ENCODE measurements at regions of chr12 and their contacts with region 1.

Region 1: DNA sequence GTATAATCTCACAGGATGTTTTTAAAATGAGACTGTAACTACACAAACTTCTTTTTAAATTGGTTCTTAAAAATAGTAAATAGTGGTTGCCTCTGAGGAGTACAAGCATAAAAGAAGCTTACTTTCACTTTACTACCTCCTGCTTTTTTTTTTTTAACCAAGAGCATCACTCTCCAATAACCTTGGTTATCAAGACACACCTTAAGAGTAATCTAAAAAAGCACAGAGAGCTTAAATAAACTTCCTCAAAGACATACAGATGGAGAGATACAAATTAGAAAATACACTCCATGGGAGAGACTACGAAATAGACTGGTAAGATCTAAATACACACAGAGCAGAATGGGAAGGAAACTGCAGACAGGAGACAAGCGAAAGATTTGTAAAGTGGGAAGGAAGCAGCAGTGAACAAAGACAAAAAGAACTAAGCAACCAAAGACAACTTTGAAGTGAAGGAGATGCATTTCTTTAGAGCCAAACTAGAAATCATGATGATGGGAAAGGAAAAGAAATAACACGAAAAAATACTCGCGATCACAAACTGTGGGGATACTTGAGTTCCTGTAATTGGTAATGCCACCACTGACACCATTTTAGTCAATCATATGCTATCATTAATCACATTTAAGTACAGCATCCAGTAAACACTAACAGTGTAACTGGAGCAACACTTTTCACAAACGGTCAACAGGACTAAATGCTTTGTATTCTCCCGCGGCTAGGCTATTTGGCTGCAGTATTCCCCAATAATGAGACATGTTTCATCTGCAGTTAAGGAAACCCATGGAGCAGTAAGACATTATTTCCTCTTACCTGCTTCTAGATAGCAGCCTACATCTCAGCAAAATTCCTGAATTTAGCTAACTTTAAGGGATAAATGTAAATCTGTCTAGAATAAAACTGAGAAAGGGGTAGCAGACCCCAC is 8.2 kb downstream of the SINHCAF start:
- DNase-seq: no peak
- H3K4me3 Mint-ChIP-seq: peak overlapping the region; percentile 74
- H3K27ac Mint-ChIP-seq: peak overlapping the region; percentile 99
- H3K4me1 Mint-ChIP-seq: peaks cover 73% of the 10 kb centered on the region
- H3K27me3 Mint-ChIP-seq: no peaks in the 10 kb centered on the region

Region 2: DNA sequence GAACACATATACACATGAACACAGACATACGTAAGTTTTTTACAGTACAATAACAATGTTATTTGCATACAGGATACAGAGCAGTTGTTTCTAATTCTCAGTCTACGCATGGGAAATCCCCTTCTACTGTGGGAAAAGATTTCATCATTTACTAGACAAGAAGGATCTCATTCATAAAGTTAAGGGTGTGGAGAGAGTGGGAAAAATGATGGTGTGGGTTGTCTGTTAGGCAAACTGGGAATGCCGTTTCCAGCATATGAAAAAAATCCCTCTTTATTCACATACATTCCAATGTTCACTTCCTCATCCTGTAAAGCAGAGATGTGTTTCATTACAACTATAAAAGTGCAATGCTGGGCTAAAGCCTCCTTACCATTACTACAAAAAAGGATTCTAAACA is 112.7 kb before region 1 on chr12:
- CTCF ChIA-PET with region 1: no interaction called
- intact Hi-C with region 1: loop called (anchors 5 kb)
- DNase-seq: no peak
- H3K4me3 Mint-ChIP-seq: no peak overlapping the region
- H3K27ac Mint-ChIP-seq: peak overlapping the region; percentile 14
- H3K4me1 Mint-ChIP-seq: peaks cover 23% of the 10 kb centered on the region
- H3K27me3 Mint-ChIP-seq: peaks cover 15% of the 10 kb centered on the region

Region 3: DNA sequence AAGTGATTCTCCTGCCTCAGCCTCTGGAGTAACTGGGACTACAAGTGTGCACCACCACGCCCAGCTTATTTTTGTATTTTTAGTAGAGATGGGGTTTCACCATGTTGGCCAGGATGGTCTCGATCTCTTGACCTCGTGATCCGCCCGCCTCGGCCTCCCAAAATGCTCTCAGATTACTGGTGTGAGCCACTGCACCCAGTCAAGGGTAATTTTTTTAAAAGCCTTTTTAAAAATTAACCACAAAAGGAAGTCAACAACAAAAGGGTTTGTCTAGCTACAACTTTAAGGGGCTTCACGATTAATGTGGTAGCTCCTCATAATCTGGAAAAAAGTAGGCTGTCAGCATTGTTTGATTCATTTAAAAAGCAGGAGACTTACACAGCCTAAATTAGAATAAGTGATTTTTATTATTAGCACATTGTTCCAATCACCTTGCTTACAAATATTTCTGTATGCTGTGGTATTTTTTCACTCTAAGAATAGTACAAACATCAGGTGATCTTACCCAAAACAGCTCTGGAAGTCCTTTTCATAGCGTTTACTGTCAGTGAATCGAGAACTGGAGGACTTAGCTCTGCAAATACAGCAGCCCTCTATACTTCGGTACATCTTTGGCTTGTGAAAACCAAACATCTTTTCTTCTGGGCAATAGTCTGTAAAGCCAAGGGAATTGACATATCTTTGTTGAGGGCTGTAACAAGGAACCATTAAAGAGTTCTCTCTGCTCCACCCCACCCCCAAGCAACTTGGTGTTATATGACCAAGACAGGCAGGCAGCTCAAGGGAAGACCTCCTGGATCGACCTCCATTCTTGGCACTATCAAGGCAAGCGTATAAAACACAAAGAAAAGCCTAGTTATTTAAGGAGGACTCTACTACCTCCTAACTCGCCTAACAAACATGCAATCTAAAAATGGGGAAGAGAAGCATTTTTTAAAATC is 19.9 kb before region 1 on chr12:
- CTCF ChIA-PET with region 1: interaction called, 3 read pairs
- intact Hi-C with region 1: loop called (anchors 2 kb)
- DNase-seq: no peak
- H3K4me3 Mint-ChIP-seq: no peak overlapping the region
- H3K27ac Mint-ChIP-seq: peak overlapping the region; percentile 83
- H3K4me1 Mint-ChIP-seq: peaks cover 35% of the 10 kb centered on the region
- H3K27me3 Mint-ChIP-seq: no peaks in the 10 kb centered on the region

Region 4: DNA sequence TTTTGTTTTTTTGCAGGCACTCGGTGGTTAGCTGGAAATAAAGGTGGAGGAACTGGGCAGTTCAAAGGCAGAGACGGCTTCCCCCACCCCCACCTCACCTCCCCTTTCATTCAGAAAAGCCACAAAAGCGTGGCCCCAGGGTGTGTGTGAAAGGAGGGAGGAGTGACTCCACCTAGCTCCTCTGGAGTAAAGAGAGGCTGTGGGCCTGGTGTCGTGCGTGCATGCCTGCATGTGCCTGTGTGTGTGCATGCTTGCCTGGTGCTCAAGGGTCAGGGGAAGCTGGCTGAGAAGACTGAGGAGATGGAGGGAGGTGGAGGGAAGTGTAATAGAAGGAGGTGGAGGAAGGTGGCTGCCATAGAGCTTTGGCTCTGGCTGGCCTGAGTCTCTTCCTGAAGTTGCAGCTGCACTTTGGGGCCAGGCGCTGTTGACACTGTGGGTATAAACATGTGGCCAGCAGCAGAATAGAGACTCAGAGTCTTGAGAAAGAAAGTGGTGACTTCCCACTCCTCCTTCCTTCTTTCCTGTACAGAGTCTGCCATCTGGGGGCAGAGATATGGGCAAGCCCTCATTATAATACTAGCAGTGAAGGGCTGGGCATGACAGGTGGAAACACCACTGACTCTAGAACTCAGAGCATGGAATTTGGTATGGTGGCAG is 45.2 kb after region 1 on chr12:
- CTCF ChIA-PET with region 1: interaction called, 3 read pairs
- intact Hi-C with region 1: loop called (anchors 2 kb)
- DNase-seq: peak; percentile 53
- H3K4me3 Mint-ChIP-seq: peak overlapping the region; percentile 38
- H3K27ac Mint-ChIP-seq: no peak overlapping the region
- H3K4me1 Mint-ChIP-seq: peaks cover 14% of the 10 kb centered on the region
- H3K27me3 Mint-ChIP-seq: no peaks in the 10 kb centered on the region